HEK293T (cell line): ENCODE measurements at regions of chr19 and their contacts with region 1.

Region 1: GRCh38 chr19:45770192-45771101 is 1.4 kb upstream of the SIX5 start:
- DNase-seq: peak; percentile 91

Region 2: GRCh38 chr19:45717166-45717982 is 53.1 kb before region 1 on chr19:
- CTCF ChIA-PET with region 1: interaction called, 4 read pairs
- POLR2A ChIA-PET with region 1: interaction called, 46 read pairs
- DNase-seq: peak; percentile 97

Region 3: DNA sequence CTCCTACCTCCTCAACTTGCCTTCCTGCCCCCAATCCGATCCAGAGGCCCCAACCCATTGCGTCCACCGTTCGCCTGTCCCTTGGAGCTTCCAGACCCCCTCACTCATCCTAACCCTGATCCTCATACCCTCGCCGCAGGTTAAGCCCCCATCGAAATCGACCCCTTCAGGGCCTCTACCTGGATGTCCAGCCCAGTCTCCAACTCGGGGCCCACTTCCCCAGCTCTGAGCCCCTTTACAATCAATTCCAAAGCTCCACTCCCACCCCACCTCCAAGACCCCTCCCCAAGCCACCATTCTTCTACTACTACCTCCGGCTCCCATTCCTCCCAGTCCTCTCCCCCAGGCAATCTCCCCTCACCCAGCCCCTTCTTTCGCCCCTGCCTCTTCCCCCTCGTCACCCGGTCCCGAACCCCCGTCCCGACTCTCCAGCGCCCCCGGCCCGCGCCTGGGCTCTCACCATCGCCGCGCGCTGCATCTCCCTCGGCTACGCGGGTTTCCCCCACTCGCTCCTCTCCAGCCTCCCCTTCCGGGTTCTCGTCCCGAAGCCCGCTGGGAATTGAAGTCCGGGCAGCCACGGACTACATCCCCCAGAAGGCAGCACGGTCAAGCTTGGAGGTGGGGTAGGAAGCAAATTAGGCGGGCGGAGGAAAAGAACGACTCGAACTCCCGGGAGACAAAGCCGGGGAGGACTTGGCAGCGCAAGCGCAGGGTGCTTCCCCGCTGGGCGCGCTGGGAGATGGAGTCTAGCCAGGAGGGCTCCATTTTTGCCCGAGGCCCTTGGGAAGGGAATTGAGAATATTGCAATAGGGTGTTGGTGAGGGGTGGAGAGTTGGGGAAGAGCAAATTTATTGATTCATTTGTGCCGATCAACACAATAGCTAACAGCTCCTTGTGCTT is 39.8 kb before region 1 on chr19 and contains the start of gene FBXO46:
- CTCF ChIA-PET with region 1: no interaction called
- POLR2A ChIA-PET with region 1: interaction called, 37 read pairs
- DNase-seq: peak; percentile 96

Region 4: DNA sequence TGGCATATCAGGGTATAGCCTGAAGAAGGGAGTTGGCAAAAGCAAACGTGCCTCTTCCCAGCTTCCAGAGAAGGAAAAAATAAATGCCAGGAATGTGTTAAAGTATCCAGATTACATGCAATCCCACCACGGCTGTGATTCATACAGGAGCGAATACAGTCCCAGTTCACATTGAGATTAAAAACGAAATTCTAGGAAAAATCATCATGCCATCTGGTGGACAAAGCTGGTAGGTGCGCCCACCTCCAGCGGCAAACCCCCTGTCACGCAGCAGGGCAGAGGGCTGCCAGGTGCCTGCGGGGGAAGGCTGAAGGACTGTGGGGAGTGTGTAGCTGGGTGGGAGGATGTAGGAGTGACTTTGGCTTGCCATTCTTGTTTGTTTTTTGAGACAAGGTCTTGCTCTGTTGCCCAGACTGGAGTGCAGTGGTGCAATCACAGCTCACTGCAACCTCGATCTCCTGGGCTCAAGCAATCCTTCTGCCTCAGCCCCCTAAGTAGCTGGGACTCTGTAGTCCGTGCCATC is 28.6 kb after region 1 on chr19:
- CTCF ChIA-PET with region 1: interaction called, 21 read pairs
- POLR2A ChIA-PET with region 1: interaction called, 11 read pairs
- DNase-seq: peak; percentile 70

Region 5: DNA sequence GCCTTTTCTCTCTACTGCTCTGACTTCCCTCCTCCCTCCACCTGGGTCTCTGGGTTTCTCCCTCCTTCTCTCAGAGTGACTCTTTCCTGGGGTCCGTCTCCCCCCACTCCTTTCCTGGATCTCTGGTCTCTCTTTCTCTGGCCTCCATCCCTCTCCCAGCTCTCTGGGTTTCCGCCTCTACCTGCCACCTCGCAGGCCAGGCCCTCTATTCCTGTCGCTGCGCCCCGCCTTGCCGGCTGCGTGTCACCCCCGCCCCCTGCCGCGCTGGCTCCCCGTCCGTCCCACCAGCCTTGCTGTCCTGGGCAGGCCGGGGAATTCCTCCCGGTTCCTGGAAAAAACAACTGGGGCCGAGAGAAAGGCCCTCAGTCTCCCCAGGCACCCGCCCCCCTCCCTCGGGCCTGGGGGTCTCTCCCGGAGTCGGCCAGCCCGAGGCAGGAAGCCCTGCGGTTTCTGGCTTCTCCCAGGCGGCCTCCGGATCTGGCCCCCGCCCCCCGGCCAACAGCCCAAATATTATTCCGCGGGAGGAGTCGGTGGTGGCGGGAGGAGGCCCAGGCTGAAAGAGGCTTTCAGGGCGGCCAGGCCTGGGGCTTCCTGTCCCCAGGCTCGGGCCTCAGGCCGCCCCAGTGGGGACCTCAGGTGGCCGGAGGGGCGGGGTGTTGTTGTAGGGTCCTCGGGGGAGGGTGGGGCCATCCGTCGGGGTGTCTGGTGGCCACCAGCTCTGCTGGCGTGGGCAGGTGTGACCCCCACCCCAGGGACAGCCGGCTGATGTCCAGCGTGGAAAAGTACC is 106.2 kb after region 1 on chr19:
- CTCF ChIA-PET with region 1: no interaction called
- POLR2A ChIA-PET with region 1: no interaction called
- DNase-seq: no peak

Region 6: GRCh38 chr19:45922281-45922680 is 151.8 kb after region 1 on chr19:
- CTCF ChIA-PET with region 1: no interaction called
- POLR2A ChIA-PET with region 1: no interaction called
- DNase-seq: peak; percentile 55